B cell (primary cell): ENCODE measurements at regions of chr11 and their contacts with region 1.

Region 1: DNA sequence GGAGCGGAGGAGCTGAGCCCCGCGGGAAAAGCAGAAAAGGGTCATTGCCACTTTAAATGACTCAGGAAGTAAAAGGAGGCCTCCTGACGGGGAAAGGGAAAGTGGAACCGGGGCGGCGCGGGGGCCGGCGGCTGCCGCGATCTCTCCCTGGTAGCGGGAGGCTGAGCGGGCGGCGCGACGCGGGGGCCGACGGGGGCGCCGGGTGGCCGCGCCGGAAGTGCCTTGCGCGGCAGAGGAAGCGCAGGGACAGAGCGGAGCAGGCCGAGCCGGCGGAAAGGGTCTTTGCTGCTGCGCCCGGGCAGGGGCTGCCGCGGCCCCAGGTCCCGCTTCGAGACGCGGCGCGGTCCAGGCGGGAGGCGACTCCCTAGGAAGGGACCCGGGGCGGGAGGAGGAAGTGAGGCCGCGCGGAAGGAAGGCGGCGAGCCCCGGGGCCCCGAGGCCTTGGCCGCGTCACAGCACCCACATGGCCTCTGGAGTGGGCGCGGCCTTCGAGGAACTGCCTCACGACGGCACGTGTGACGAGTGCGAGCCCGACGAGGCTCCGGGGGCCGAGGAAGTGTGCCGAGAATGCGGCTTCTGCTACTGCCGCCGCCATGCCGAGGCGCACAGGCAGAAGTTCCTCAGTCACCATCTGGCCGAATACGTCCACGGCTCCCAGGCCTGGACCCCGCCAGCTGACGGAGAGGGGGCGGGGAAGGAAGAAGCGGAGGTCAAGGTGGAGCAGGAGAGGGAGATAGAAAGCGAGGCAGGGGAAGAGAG is at the start of gene TRIM44:
- DNase-seq: peak; percentile 92
- ATAC-seq: peak; percentile 83
- H3K4me3 ChIP-seq: peak within 1 kb of the TSS; percentile 76 to 98 (median 89)
- H3K4me3 Mint-ChIP-seq: peak within 1 kb of the TSS; percentile 88
- H3K27ac ChIP-seq: peak within 1 kb of the TSS; percentile 86 to 96
- H3K27ac Mint-ChIP-seq: peak within 1 kb of the TSS; percentile 97
- H3K4me1 ChIP-seq: peaks cover 26 to 29% of the 10 kb centered on the region in 2 donors
- H3K4me1 Mint-ChIP-seq: peaks cover 40% of the 10 kb centered on the region
- H3K27me3 ChIP-seq: peaks cover 0 to 5% (median 0%) of the 10 kb centered on the region in 4 experiments
- H3K27me3 Mint-ChIP-seq: peaks cover 13% of the 10 kb centered on the region
- CTCF ChIP-seq: no peak
- total RNA-seq, gene TRIM44: 71.1 TPM in 2 replicates

Region 2: DNA sequence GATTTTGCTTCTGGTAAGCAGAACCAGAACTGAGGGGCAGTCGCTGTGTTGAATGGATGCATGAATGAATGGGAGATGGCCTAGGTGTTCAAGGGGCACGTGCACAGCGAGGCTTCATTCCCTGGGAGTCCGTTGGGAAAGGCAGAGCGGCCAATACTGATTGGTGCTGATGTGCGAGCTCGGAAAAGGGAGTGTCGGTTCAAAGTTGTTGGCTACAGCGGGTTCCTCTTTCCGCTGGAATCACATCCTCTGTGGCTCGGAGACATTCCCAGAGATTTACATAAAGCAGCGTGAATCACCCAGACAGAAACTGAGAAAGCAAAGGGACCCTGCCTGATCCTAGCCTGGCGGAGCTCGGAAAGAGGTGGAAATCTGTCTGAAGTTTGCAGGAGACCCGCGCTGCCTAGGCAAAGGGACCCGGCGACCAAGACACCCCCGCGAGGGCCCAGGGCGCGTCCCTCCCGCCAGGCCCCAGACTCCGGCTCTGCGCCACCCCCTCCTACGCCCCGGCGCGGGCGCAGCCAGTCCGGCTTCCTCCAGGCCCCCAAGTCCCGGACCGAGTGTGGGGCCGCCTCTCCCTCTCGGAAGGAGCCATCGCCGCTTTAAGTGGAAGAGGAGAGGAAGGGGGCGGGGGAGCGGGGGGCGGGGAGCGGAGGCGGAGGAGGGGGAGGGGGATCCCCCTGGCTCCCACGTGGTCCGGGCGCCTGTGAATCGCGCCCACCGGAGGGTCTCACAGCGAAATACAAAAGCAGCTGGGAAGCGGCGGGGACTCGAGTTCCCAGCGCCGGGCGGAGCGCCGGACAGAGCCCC is 44.9 kb before region 1 on chr11 and contains the start of gene FJX1:
- CTCF ChIA-PET with region 1: no interaction called
- POLR2A ChIA-PET with region 1: no interaction called
- intact Hi-C with region 1: loop called (anchors 5 kb)
- DNase-seq: peak; percentile 29
- ATAC-seq: peak; percentile 38
- H3K4me3 ChIP-seq: peak within 1 kb of the TSS; percentile 7 to 55 (median 42)
- H3K4me3 Mint-ChIP-seq: peak within 1 kb of the TSS; percentile 83
- H3K27ac ChIP-seq: no peak within 1 kb of the TSS
- H3K27ac Mint-ChIP-seq: no peak within 1 kb of the TSS
- H3K4me1 ChIP-seq: peaks cover 17 to 21% of the 10 kb centered on the region in 2 donors
- H3K4me1 Mint-ChIP-seq: peaks cover 16% of the 10 kb centered on the region
- H3K27me3 ChIP-seq: peaks cover 0 to 52% (median 32%) of the 10 kb centered on the region in 4 experiments
- H3K27me3 Mint-ChIP-seq: peaks cover 44% of the 10 kb centered on the region
- CTCF ChIP-seq: no peak
- total RNA-seq, gene FJX1: 0.36 TPM in 1 of 2 replicates, not detected in the other

Region 3: DNA sequence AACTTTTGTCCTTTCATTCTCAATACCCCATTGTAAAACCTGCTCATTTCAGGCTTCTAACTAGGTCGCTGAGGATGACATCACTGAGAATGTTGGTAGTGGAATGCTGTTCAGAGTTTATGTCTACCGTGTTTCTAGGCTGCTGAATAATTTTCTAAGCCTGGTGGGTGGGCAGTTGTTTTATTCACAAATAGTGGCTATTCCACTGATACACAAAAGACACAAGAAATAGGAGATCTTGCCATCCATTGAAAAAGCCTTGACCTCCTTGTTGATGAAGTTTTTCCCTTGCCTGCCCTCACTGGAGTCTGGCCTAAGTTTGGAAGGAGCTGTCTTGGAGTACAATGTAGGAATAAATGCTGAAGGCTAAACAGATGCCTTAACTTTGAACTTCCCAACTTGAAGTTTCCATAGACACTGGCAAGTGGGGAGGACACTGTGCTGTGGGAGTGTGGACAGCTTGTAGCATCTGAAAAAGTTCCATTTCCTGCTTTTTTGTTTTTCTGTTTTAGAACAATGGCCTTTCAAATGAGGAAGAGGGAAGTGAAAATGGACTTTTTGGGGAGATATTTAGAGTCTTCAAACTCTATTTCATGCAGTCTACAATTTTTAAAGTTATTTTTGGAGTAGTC is 58.9 kb after region 1 on chr11:
- CTCF ChIA-PET with region 1: no interaction called
- POLR2A ChIA-PET with region 1: no interaction called
- intact Hi-C with region 1: loop called (anchors 10 kb)
- DNase-seq: peak; percentile 44
- ATAC-seq: peak; percentile 39
- H3K4me3 ChIP-seq: peak overlapping the region in 1 of 5 experiments; percentile 38
- H3K4me3 Mint-ChIP-seq: peak overlapping the region; percentile 70
- H3K27ac ChIP-seq: peak overlapping the region; percentile 54 to 82
- H3K27ac Mint-ChIP-seq: peak overlapping the region; percentile 89
- H3K4me1 ChIP-seq: peaks cover 23 to 31% of the 10 kb centered on the region in 2 donors
- H3K4me1 Mint-ChIP-seq: peaks cover 56% of the 10 kb centered on the region
- H3K27me3 ChIP-seq: no peaks in the 10 kb centered on the region
- H3K27me3 Mint-ChIP-seq: no peaks in the 10 kb centered on the region
- CTCF ChIP-seq: no peak

Region 4: DNA sequence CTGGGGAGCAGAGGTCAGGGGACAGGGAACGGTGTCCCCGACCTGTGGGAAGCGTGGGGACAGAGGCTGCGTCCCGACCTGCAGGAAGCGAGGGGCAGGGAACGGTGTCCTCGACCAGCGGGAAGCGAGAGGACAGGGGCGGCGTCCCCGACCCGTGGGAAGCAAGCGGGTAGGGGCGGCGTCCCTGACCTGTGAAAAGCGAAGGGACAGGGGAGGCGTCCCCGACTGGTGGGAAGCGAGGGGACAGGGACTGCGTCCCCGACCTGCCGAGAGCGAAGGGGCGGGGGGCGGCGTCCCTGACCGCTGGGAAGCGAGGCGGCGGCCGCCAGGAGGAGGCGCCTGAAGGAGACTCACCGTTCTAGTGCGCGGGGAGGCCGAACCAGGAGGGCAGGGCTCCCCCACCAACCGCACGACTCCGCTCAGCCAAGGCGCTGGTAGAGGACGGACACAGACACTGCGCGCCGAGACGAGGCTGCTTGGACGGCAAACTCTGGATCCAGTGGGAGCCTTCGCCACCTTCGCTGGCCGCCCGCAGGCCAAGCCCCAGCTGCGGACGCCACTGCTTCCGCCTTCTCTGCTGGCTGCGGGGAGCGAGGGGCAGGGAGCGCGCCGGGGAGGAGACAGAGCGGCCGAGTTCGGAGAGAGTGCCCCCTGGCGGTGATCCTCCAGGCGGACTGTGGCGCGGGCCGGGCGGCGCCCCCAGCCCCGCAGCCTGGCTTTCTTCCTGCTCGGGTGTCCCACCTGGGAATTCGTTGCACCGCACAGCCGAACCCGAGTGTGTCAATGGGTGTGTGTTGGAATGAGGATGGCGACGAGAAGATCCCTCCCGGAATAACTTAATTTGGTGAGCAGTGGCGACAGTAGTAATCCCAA is 847.1 kb after region 1 on chr11 and contains the start of gene TRAF6:
- CTCF ChIA-PET with region 1: no interaction called
- POLR2A ChIA-PET with region 1: no interaction called
- intact Hi-C with region 1: loop called (anchors 2 kb)
- DNase-seq: peak; percentile 92
- ATAC-seq: peak; percentile 94
- H3K4me3 ChIP-seq: peak within 1 kb of the TSS; percentile 73 to 95 (median 92)
- H3K4me3 Mint-ChIP-seq: peak within 1 kb of the TSS; percentile 96
- H3K27ac ChIP-seq: peak within 1 kb of the TSS; percentile 72 to 86
- H3K27ac Mint-ChIP-seq: peak within 1 kb of the TSS; percentile 97
- H3K4me1 ChIP-seq: peaks cover 16 to 17% of the 10 kb centered on the region in 2 donors
- H3K4me1 Mint-ChIP-seq: peaks cover 27% of the 10 kb centered on the region
- H3K27me3 ChIP-seq: peaks cover 0 to 2% (median 0%) of the 10 kb centered on the region in 4 experiments
- H3K27me3 Mint-ChIP-seq: peaks cover 16% of the 10 kb centered on the region
- CTCF ChIP-seq: peak; percentile 91
- total RNA-seq, gene TRAF6: 20.2 and 22.4 TPM in 2 replicates